GM12878 (cell line): ENCODE measurements at regions of chr2 and their contacts with region 1.

Region 1: DNA sequence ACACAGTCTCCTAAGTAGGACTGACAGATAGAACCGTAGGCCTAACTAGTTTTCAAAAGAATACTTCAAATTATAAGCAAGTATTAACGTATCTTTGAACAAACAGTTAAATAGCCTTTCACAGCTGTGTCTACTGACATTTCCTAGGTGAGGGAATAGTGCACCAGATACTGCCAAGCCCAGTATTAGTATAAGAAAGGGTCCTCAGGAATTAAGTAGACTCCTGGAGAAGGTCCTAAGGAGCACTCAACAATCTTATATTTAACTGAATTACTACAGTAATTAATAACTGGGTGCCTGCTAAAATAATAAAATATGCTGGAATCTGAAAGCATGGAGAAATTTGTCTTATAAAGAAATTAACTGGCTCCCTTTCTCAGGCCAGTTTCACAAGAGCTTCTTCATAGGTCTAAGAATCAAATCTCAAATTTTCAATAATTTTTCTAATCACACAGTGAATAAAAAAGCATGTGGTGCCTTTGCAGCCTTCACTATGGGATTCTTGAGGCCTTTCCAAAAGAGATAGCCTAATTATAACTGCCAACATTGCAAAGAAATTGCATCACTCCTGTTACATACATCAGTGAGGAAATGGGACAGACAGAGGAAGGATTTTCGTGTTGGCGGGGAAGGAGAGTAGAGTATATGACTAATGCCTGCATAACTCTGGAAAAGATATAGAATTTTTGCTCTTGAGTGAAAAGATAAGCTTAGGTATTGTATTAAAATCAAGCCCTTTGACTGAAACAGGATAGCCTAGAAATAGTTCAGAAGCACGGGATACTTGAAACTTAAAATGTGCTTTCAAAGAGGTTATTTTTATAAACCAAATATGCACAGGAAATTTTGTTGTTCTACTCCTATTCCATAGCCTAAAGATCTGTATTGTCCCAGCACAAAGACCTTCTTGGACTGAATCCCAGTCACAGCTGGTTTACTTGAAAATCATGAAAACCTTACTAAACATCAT is 228.6 kb upstream of the STK17B start:
- DNase-seq: no peak
- ATAC-seq: no peak
- H3K4me3 ChIP-seq: peak overlapping the region; percentile 4; the same call in 1 of the 2 replicates
- H3K27ac ChIP-seq: peak overlapping the region; percentile 44
- H3K4me1 ChIP-seq: no peaks in the 10 kb centered on the region
- H3K27me3 ChIP-seq: no peaks in the 10 kb centered on the region
- CTCF ChIP-seq: no peak
- EP300 ChIP-seq: no peak
- POLR2A ChIP-seq: no peak
- RAD21 ChIP-seq: no peak

Region 2: DNA sequence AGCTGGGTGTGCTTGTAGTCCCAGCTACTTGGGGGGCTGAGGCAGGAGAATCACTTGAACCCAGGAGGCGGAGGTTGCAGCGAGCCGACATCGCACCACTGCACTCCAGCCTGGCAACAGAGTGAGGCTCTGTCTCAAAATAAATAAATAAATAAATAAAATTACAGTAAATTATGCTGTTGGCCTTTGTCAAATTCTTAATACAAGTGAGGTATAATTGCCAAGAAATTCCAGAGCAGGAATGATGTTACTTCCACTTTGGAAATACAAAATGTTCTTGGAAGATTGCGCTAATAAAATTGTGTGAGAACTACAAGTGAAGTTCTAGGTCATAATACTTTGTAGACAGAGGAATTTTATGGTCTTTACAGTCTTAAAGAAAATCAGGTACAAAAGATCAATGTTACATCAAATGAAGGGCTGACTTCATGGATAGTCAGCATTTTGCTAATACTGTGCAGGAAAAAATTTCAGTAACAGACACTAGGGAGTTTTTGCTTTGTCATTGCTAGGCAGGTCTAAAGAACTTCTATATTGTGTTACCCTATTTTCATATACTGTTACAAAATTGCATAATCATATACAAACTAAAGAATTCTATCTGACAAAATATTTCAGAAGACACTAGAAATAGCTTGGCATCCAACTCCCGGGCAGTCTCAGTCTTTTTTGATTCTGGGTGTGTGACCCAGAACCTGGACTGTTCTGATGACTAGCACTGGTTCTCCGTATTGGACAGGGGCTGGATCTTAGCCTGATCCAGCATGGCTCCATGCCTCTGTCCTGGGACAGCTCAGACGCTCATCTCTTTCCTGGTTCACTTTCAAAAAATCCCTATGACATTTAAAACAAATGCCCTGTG is 152.7 kb before region 1 on chr2:
- CTCF ChIA-PET with region 1: no interaction called
- POLR2A ChIA-PET with region 1: no interaction called
- RAD21 ChIA-PET with region 1: no interaction called
- SMC1A ChIA-PET with region 1: no interaction called
- in situ Hi-C with region 1: no loop called
- intact Hi-C with region 1: no loop called
- DNase-seq: no peak
- ATAC-seq: no peak
- H3K4me3 ChIP-seq: no peak overlapping the region
- H3K27ac ChIP-seq: no peak overlapping the region
- H3K4me1 ChIP-seq: peaks cover 11% of the 10 kb centered on the region
- H3K27me3 ChIP-seq: no peaks in the 10 kb centered on the region
- CTCF ChIP-seq: no peak
- EP300 ChIP-seq: no peak
- POLR2A ChIP-seq: no peak
- RAD21 ChIP-seq: no peak

Region 3: DNA sequence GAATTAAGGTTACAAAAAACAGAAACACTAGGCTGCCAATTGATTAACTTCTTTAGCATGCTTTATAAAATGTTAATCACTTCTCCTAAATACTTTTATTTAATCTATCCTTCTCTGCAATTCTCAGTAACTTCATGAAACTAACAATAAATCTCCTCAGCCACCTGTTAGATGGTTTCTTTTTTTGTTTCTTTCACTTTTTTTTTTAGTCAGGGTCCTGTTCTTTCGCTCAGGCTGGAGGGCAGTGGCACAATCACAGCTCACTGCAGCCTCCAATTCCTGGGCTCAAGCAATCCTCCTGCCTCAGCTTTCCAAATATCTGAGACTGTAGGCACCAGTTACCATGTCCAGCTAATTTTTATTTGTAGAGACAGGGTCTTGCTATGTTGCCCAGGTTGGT is 15.3 kb before region 1 on chr2:
- CTCF ChIA-PET with region 1: interaction called, 16 read pairs
- POLR2A ChIA-PET with region 1: interaction called, 26 read pairs
- RAD21 ChIA-PET with region 1: interaction called, 19 read pairs
- SMC1A ChIA-PET with region 1: interaction called, 157 read pairs
- in situ Hi-C with region 1: no loop called
- intact Hi-C with region 1: no loop called
- DNase-seq: no peak
- ATAC-seq: peak; percentile 56
- H3K4me3 ChIP-seq: peak overlapping the region; percentile 21
- H3K27ac ChIP-seq: peak overlapping the region; percentile 63
- H3K4me1 ChIP-seq: peaks cover 34% of the 10 kb centered on the region
- H3K27me3 ChIP-seq: no peaks in the 10 kb centered on the region
- CTCF ChIP-seq: no peak
- EP300 ChIP-seq: no peak
- POLR2A ChIP-seq: no peak
- RAD21 ChIP-seq: no peak

Region 4: GRCh38 chr2:196413821-196414274 is 13.8 kb after region 1 on chr2:
- CTCF ChIA-PET with region 1: interaction called, 5 read pairs
- POLR2A ChIA-PET with region 1: interaction called, 16 read pairs
- RAD21 ChIA-PET with region 1: interaction called, 13 read pairs
- SMC1A ChIA-PET with region 1: interaction called, 21 read pairs
- in situ Hi-C with region 1: no loop called
- intact Hi-C with region 1: no loop called
- DNase-seq: peak; percentile 73
- ATAC-seq: peak; percentile 87
- H3K4me3 ChIP-seq: no peak overlapping the region
- H3K27ac ChIP-seq: peak overlapping the region; percentile 91
- H3K4me1 ChIP-seq: peaks cover 51% of the 10 kb centered on the region
- H3K27me3 ChIP-seq: no peaks in the 10 kb centered on the region
- CTCF ChIP-seq: no peak
- EP300 ChIP-seq: 0 out of 4 replicates have a peak, but pooled peaks of 1 of the 2 experiments have one; percentile 24
- POLR2A ChIP-seq: peak; percentile 74
- RAD21 ChIP-seq: 0 out of 2 replicates have a peak, but pooled peaks have one; percentile 14

Region 5: GRCh38 chr2:196431957-196432356 is 31.9 kb after region 1 on chr2:
- CTCF ChIA-PET with region 1: no interaction called
- POLR2A ChIA-PET with region 1: interaction called, 4 read pairs
- RAD21 ChIA-PET with region 1: interaction called, 6 read pairs
- SMC1A ChIA-PET with region 1: interaction called, 10 read pairs
- in situ Hi-C with region 1: no loop called
- intact Hi-C with region 1: no loop called
- DNase-seq: no peak
- ATAC-seq: 0 out of 3 replicates have a peak, but pooled peaks have one; percentile 32
- H3K4me3 ChIP-seq: no peak overlapping the region
- H3K27ac ChIP-seq: no peak overlapping the region
- H3K4me1 ChIP-seq: peaks cover 28% of the 10 kb centered on the region
- H3K27me3 ChIP-seq: no peaks in the 10 kb centered on the region
- CTCF ChIP-seq: peak in 2 of 3 experiments; percentile 6 to 15; a peak in 1 of 6 replicates
- EP300 ChIP-seq: no peak
- POLR2A ChIP-seq: no peak
- RAD21 ChIP-seq: no peak

Region 6: DNA sequence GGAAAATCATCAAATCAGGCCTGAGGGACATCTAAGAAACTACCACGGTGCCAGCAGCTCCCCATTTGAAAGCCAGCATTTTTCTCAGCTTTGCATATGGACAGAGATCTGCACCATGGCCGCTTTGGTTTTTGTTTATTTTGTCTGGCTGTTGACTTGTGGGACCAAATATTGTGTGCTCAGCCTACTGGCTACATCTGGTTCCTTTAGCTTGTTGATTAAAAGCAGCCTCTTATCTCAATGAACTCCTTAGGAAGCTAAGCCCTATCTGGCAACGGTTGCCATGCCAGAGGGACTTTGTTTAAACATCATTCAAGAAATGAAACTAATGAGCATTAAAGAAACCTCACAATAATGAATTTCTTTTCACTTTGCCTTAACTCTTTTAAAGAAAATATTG is 207.1 kb after region 1 on chr2:
- CTCF ChIA-PET with region 1: no interaction called
- POLR2A ChIA-PET with region 1: no interaction called
- RAD21 ChIA-PET with region 1: no interaction called
- SMC1A ChIA-PET with region 1: no interaction called
- in situ Hi-C with region 1: no loop called
- intact Hi-C with region 1: no loop called
- DNase-seq: no peak
- ATAC-seq: no peak
- H3K4me3 ChIP-seq: no peak overlapping the region
- H3K27ac ChIP-seq: no peak overlapping the region
- H3K4me1 ChIP-seq: no peaks in the 10 kb centered on the region
- H3K27me3 ChIP-seq: no peaks in the 10 kb centered on the region
- CTCF ChIP-seq: no peak
- EP300 ChIP-seq: no peak
- POLR2A ChIP-seq: no peak
- RAD21 ChIP-seq: no peak